H1 (cell line): ENCODE measurements at regions of chr1 and their contacts with region 1.

Region 1: GRCh38 chr1:161098210-161099068 is at the start of gene KLHDC9:
- DNase-seq: peak in 1 of 2 experiments; percentile 87
- H3K4me3 ChIP-seq: peak within 1 kb of the TSS; percentile 63 to 89 (median 71)
- H3K27ac ChIP-seq: no peak within 1 kb of the TSS
- H3K4me1 ChIP-seq: peaks cover 0 to 6% (median 0%) of the 10 kb centered on the region in 4 experiments; a peak in 2 of 7 replicates
- H3K27me3 ChIP-seq: no peaks in the 10 kb centered on the region
- CTCF ChIP-seq: peak in 2 of 3 experiments; percentile 30 to 37; a peak in 3 of 4 replicates
- EP300 ChIP-seq: peak in 1 of 2 experiments; percentile 33; a peak in 1 of 3 replicates
- POLR2A ChIP-seq: peak in 1 of 2 experiments; percentile 51; a peak in 1 of 3 replicates
- RAD21 ChIP-seq: peak; percentile 5 to 12; a peak in 1 of 4 replicates
- total RNA-seq, gene KLHDC9: 4.0 and 6.5 TPM in 2 replicates

Region 2: DNA sequence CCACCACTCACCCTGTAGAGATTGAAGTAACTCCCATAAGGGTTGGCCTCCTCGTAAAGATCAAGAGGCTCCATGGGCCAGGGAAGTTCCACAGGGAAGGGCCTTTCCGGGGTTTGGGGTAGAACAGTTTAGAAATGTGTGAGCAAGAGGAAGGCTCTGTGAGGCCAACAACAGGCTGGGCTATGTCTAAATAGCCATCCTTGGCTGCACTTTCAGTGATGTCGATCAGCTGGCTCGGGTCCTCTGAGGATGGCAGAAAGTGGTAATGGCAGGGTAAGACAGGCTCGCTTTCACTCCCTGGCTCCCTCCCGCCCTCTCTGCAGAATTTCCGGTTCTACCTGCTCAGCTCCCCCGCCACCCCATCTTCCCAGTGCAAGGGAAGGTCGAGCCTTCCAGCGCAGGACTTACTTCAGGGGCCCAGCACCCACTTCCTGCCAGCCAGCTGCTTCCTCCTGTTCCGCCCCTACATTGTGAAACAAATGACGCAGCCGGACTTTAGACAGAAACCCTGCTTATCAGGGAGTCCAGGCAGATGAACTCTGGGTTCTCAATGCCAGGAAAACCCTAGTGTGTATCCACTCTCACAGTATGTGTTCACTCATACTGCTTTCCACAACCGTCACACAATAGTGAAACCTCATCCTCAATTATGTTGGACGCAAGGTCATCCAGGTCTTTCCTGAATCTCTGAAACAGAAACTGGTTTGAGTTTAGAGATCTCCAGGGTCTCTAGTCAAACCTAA is 84.8 kb before region 1 on chr1:
- CTCF ChIA-PET with region 1: interaction called, 12 read pairs
- POLR2A ChIA-PET with region 1: no interaction called
- DNase-seq: peak in 1 of 2 experiments; percentile 69
- H3K4me3 ChIP-seq: peak overlapping the region in 2 of 4 experiments; percentile 21 to 24; a peak in 3 of 8 replicates
- H3K27ac ChIP-seq: peak overlapping the region; percentile 66; the same call in 1 of the 2 replicates
- H3K4me1 ChIP-seq: peaks cover 15 to 29% (median 21%) of the 10 kb centered on the region in 4 experiments
- H3K27me3 ChIP-seq: no peaks in the 10 kb centered on the region
- CTCF ChIP-seq: no peak
- EP300 ChIP-seq: peak in 1 of 2 experiments; percentile 40; a peak in 1 of 3 replicates
- POLR2A ChIP-seq: peak; percentile 28 to 32; a peak in 2 of 3 replicates
- RAD21 ChIP-seq: no peak

Region 3: GRCh38 chr1:161038523-161039153 is 59.8 kb before region 1 on chr1 and contains the start of gene TSTD1:
- CTCF ChIA-PET with region 1: interaction called, 73 read pairs
- POLR2A ChIA-PET with region 1: interaction called, 5 read pairs
- DNase-seq: peak in 1 of 2 experiments; percentile 88
- H3K4me3 ChIP-seq: peak within 1 kb of the TSS; percentile 64 to 97 (median 85)
- H3K27ac ChIP-seq: 0 out of 2 replicates have a peak within 1 kb of the TSS, but pooled peaks have one; percentile 22
- H3K4me1 ChIP-seq: peaks cover 5 to 11% (median 8%) of the 10 kb centered on the region in 4 experiments; a peak in 6 of 7 replicates
- H3K27me3 ChIP-seq: no peaks in the 10 kb centered on the region
- CTCF ChIP-seq: peak in 1 of 3 experiments; percentile 34; a peak in 2 of 4 replicates
- EP300 ChIP-seq: no peak
- POLR2A ChIP-seq: peak; percentile 62 to 68
- RAD21 ChIP-seq: peak in 1 of 2 experiments; percentile 3; a peak in 1 of 4 replicates
- total RNA-seq, gene TSTD1: 60.4 and 60.9 TPM in 2 replicates

Region 4: DNA sequence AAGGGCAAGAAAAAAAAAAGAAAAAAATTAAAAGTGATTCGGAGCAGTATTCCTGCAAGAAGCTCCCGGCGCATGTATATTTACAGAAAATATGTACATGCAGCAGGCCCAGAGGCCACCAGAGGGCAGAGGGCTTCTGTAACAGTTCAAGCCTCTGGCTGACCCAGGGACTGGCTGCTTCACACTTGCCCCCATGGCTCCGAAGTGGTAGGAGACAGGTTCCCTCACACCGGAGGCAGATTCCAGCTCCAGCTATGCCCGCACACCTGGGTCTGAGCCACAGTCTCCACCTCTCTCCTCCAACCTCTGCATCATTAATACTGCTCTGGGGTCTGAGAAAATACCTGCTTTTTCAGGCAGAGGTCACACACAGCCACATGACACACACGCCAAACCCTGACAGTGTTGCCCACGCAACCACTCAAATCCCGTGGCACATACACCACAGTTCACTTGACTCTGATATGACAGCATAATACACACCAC is 26.5 kb before region 1 on chr1:
- CTCF ChIA-PET with region 1: interaction called, 282 read pairs
- POLR2A ChIA-PET with region 1: interaction called, 6 read pairs
- DNase-seq: peak; percentile 33 to 65
- H3K4me3 ChIP-seq: no peak overlapping the region
- H3K27ac ChIP-seq: no peak overlapping the region
- H3K4me1 ChIP-seq: peaks cover 0 to 8% (median 3%) of the 10 kb centered on the region in 4 experiments; a peak in 3 of 7 replicates
- H3K27me3 ChIP-seq: no peaks in the 10 kb centered on the region
- CTCF ChIP-seq: peak; percentile 72 to 84 (median 81)
- EP300 ChIP-seq: no peak
- POLR2A ChIP-seq: no peak
- RAD21 ChIP-seq: peak; percentile 66 to 81

Region 5: GRCh38 chr1:161132410-161133219 is 34.2 kb after region 1 on chr1 and contains the start of gene DEDD:
- CTCF ChIA-PET with region 1: interaction called, 58 read pairs
- POLR2A ChIA-PET with region 1: interaction called, 32 read pairs
- DNase-seq: peak; percentile 90 to 96
- H3K4me3 ChIP-seq: peak within 1 kb of the TSS; percentile 71 to 97 (median 84)
- H3K27ac ChIP-seq: peak within 1 kb of the TSS; percentile 95
- H3K4me1 ChIP-seq: no peaks in the 10 kb centered on the region; a peak in 1 of 7 replicates
- H3K27me3 ChIP-seq: no peaks in the 10 kb centered on the region
- CTCF ChIP-seq: peak in 1 of 3 experiments; percentile 31; a peak in 1 of 4 replicates
- EP300 ChIP-seq: no peak; a peak in 1 of 3 replicates
- POLR2A ChIP-seq: peak; percentile 59 to 71
- RAD21 ChIP-seq: no peak
- total RNA-seq, gene DEDD: 42.0 and 42.6 TPM in 2 replicates